Ascending aorta (tissue), 2 donors: ENCODE measurements at regions of chr7 and their contacts with region 1.

Region 1: DNA sequence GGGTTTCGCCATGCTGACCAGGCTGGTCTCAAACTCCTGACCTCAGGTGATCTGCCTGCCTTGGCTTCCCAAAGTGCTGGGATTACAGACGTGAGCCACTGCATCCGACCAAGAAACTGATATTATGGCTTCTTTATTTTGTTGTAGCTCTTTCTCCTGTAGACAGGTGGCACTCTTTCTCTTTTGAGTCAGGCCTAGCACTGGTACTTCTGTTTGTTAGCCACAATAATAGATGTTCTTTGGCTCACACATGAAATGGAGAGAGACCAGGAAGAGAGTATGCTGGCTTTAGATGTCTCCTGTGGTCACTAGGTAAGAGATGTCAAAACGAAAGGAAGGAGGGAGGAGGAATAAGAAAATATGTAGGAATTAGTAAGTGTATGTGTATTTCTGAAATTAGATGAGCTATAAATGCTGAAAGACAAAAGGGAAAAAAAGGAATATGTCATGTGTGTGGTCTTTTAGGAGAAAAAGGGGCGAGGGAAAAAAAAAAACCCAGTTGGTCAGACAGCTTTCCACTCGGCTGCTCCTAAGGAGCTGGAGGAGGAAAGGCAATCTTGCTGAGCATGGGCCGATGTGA is 78.7 kb downstream of the CLEC2L start:
- DNase-seq: no peak
- H3K4me3 ChIP-seq: no peak overlapping the region
- H3K27ac ChIP-seq: no peak overlapping the region
- H3K4me1 ChIP-seq: no peaks in the 10 kb centered on the region
- H3K27me3 ChIP-seq: no peaks in the 10 kb centered on the region
- CTCF ChIP-seq: peak in 2 of 3 experiments; percentile 36 to 55

Region 2: GRCh38 chr7:139403601-139404000 is 198.6 kb before region 1 on chr7:
- intact Hi-C with region 1: no loop called
- DNase-seq: no peak
- H3K4me3 ChIP-seq: no peak overlapping the region
- H3K27ac ChIP-seq: no peak overlapping the region
- H3K4me1 ChIP-seq: no peaks in the 10 kb centered on the region
- H3K27me3 ChIP-seq: no peaks in the 10 kb centered on the region
- CTCF ChIP-seq: no peak

Region 3: GRCh38 chr7:139568813-139569490 is 33.3 kb before region 1 on chr7:
- intact Hi-C with region 1: loop called (anchors 1 kb)
- DNase-seq: peak in 1 of 2 donors; percentile 54
- H3K4me3 ChIP-seq: no peak overlapping the region
- H3K27ac ChIP-seq: no peak overlapping the region
- H3K4me1 ChIP-seq: no peaks in the 10 kb centered on the region
- H3K27me3 ChIP-seq: no peaks in the 10 kb centered on the region
- CTCF ChIP-seq: no peak